Ovary (tissue), 10 donors: ENCODE measurements at regions of chr17 and their contacts with region 1.

Region 1: DNA sequence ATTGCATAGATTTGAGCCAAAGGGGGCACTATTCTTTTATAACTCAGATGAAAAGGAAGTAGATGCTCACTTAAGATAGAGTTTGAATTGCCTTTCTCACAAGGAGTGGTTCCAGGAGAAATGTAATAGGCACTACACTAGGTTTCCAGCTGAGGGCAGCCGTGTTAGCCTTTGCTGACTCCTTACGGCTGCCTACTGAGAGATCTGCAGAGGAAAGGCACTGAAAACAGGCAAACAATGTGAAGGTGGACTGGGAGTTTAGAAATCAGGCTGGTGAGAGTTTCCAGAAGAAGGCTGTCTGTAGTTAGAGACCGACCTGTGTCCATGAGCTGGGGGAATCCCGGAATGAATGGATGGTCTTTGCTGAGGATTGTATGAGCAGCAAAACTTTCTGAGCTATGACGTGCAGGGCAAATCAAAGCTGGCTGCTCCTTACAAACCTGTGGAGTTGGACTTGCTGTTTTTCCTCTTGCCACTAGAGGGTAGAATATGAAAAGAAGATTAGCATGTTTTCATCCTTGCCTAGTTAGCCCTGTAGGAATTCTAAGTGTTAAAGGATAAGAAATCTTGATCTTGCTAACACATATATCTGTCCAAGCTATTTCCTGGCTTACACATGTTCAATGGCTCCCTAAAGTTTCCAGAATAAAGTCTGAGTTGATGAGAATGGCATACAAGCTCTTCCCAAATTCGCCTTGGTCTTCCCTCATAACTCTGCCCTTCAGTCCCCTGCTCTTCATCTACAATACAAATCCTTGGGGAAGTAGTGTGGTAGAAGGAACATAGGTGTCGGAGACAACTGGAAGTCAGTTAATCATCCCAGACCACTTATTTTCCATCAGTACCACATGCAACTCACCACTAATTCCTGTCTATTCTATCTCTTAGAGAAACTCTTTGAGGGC is 20.1 kb upstream of the TAOK1 start:
- DNase-seq: peak; percentile 34 to 61 (median 41)
- H3K4me3 ChIP-seq: no peak overlapping the region
- H3K27ac ChIP-seq: no peak overlapping the region
- H3K4me1 ChIP-seq: no peaks in the 10 kb centered on the region
- H3K27me3 ChIP-seq: no peaks in the 10 kb centered on the region
- CTCF ChIP-seq: peak; percentile 44 to 80 (median 78)
- EP300 ChIP-seq: no peak
- POLR2A ChIP-seq: no peak

Region 2: DNA sequence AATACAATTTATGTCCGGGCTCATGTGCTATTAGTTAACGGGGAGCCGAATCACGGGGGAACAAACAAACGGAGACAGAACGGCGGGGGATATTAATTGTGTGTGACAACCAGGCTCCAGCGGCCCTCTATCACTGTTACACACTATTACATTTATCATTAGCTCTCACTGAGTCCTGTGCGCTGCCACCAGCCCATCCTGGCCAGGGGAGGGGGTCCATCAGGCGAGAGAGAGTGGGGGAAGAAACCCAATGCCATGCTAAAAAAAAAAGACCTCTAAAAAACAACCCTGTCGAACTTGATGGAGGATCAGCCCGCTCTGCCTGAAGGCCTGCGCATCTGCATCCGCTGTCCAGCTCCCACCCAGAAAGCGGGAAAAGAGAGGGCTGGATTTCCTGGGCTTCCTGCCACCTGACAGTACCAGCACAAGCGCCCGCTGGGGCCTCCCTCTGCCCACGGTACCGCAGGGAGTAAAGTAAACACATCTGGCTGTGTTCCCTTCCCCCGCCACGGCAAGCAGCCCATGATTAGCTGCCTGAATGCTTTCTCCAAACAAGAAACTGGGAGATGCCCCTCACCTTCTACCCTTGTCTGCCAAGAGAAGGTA is 285.4 kb before region 1 on chr17:
- intact Hi-C with region 1: no loop called
- DNase-seq: no peak
- H3K4me3 ChIP-seq: no peak overlapping the region
- H3K27ac ChIP-seq: no peak overlapping the region
- H3K4me1 ChIP-seq: no peaks in the 10 kb centered on the region
- H3K27me3 ChIP-seq: no peaks in the 10 kb centered on the region
- CTCF ChIP-seq: no peak
- EP300 ChIP-seq: no peak
- POLR2A ChIP-seq: no peak

Region 3: GRCh38 chr17:29533976-29534375 is 163.9 kb after region 1 on chr17:
- intact Hi-C with region 1: loop called in 3 of 4 experiments (anchors 5 to 10 kb)
- DNase-seq: no peak
- H3K4me3 ChIP-seq: no peak overlapping the region
- H3K27ac ChIP-seq: no peak overlapping the region
- H3K4me1 ChIP-seq: no peaks in the 10 kb centered on the region
- H3K27me3 ChIP-seq: no peaks in the 10 kb centered on the region
- CTCF ChIP-seq: no peak
- EP300 ChIP-seq: no peak
- POLR2A ChIP-seq: no peak

Region 4: DNA sequence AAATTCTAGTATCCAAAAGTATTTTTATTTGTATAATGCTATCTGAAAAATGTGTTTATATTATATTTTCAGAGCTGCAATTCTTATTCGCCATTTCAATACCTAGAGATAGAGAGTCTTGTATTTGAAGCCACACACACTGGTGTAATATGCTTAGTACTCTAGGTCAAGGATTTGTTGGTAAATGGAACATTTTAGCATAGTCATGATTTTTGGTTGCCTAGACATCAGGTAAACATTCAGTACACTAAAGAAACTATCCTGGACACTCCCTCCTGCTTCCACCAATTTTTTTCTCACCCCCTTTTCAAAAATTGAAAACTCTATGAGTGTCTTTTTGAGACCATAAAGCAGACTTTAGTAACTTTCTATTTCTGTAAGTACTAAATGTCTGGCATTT is 176.0 kb after region 1 on chr17:
- intact Hi-C with region 1: loop called in 1 of 4 experiments (anchors 2 kb)
- DNase-seq: no peak
- H3K4me3 ChIP-seq: no peak overlapping the region
- H3K27ac ChIP-seq: no peak overlapping the region
- H3K4me1 ChIP-seq: no peaks in the 10 kb centered on the region
- H3K27me3 ChIP-seq: no peaks in the 10 kb centered on the region
- CTCF ChIP-seq: no peak
- EP300 ChIP-seq: no peak
- POLR2A ChIP-seq: no peak

Region 5: GRCh38 chr17:30886187-30886586 is 1516.1 kb after region 1 on chr17:
- intact Hi-C with region 1: no loop called
- DNase-seq: no peak
- H3K4me3 ChIP-seq: no peak overlapping the region
- H3K27ac ChIP-seq: no peak overlapping the region
- H3K4me1 ChIP-seq: no peaks in the 10 kb centered on the region
- H3K27me3 ChIP-seq: no peaks in the 10 kb centered on the region
- CTCF ChIP-seq: no peak
- EP300 ChIP-seq: no peak
- POLR2A ChIP-seq: no peak